CD8-positive, alpha-beta T cell (primary cell): ENCODE measurements at regions of chr5 and their contacts with region 1.

Region 1: DNA sequence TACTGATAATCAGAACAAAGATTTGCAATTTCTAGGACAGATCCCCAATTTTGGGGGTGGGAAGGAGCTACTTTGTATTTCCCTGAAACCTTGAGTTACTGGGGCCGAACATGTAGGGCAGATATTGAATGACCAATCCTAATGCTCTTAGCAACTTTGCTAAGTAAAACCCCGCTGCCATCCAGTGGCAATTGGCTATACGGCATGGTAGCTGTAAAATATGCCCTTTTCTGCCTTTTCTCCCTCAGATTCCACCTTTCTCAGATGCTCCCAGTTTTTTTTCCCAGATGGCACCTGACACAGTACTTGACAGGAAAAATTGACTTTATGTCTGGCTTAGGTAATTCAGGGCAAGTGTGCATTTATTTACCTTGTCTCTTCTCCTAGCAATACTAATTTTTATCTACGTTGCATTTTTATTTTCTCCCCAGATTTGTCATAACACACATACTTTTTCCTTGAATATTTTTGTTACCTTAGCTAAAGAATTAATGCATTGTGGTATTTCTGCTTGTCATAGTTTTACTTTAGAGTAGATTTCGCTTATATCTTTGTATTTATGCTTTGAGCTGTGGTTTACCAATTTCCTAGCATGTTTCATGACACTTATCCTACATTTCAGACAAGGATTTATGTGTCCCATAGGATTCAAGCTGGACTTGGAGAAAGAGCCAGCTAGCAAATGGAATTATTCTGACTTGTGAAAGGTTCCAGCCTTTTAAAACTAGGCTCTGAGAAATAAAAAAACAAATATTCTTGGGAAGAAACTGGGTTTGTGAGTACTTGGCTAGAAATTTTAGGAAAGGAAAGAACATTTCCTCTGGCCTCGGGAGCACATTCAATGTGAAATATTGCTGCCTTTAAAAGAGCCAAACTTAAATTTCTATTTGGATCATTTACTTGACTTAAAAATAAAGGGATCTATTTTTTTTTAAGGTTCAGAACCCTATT is 37.4 kb downstream of the PIK3R1 start:
- DNase-seq: peak in 7 of 9 experiments; percentile 28 to 71 (median 56)
- ATAC-seq: no peak
- H3K4me3 ChIP-seq: no peak overlapping the region
- H3K4me3 Mint-ChIP-seq: no peak overlapping the region
- H3K27ac ChIP-seq: peak overlapping the region in 1 of 2 experiments; percentile 8
- H3K27ac Mint-ChIP-seq: peak overlapping the region; percentile 22
- H3K4me1 ChIP-seq: peaks cover 81% of the 10 kb centered on the region
- H3K4me1 Mint-ChIP-seq: peaks cover 91% of the 10 kb centered on the region
- H3K27me3 ChIP-seq: no peaks in the 10 kb centered on the region
- H3K27me3 Mint-ChIP-seq: no peaks in the 10 kb centered on the region
- CTCF ChIP-seq: peak; percentile 78

Region 2: DNA sequence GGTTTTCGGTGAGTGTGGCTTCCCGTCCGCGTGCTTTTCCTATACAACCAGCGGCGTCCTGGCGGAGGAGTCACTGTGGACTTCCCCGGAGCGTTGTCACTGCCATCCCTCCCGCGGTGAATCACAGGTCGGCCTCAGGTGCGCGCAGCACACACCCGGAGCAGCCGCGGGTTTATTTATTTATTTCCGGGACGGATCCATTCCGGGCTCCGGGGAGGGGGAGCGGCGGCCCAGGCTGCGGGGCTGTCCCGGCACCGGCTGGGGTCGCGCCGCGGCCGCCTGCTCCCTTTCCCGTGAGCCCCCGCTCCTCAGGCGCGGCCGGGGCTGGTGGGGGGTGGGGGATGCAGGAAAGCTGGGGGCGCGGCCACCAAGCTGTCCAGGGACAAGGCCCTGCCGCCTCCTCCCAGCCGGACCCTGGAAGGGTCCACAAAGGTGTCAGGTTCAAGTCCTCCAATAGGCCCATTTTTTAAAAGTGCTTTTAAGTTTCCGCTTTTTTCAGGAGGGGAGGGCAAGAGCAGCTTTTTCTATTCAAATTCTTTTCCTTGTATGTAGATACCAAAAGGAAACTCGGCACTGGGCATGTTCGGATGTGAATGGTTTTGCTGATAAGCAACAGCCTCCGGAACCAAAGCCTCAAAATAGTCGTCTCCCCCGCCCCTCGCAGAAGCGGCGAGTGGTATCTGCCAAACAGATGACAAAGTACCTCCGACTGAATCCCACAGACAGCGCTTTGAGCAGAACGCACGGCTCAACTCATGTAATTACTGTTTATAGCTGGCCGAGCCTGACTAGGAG is 1248.8 kb before region 1 on chr5:
- CTCF ChIA-PET with region 1: no interaction called
- POLR2A ChIA-PET with region 1: no interaction called
- intact Hi-C with region 1: loop called in 1 of 2 experiments (anchors 10 kb)
- DNase-seq: peak; percentile 70 to 93 (median 87)
- ATAC-seq: peak; percentile 78
- H3K4me3 ChIP-seq: peak overlapping the region; percentile 75 to 85
- H3K4me3 Mint-ChIP-seq: peak overlapping the region; percentile 95
- H3K27ac ChIP-seq: peak overlapping the region; percentile 59 to 75
- H3K27ac Mint-ChIP-seq: peak overlapping the region; percentile 98
- H3K4me1 ChIP-seq: peaks cover 36% of the 10 kb centered on the region
- H3K4me1 Mint-ChIP-seq: peaks cover 52% of the 10 kb centered on the region
- H3K27me3 ChIP-seq: no peaks in the 10 kb centered on the region
- H3K27me3 Mint-ChIP-seq: no peaks in the 10 kb centered on the region
- CTCF ChIP-seq: no peak

Region 3: DNA sequence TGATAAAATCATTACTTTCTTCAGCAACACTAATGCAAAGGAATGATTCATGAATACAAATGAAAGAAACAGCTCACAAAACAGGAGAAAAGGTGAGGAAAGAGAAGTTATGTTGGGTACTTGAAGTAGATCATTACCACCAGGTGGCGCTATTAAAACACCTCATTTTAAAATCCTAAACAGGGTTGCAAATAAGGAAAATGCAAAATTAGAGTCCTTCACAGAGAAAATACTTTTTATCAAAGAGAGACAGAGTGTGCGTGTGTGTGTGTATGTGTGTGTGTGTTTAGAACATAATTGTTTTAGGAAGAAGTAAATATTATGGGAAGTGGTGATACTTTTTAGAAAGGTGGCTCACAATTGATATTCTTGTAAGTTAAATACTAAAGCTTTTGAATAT is 1006.8 kb before region 1 on chr5:
- CTCF ChIA-PET with region 1: interaction called, 73 read pairs
- POLR2A ChIA-PET with region 1: no interaction called
- intact Hi-C with region 1: loop called (anchors 1 to 2 kb)
- DNase-seq: peak in 3 of 9 experiments; percentile 39 to 80 (median 74)
- ATAC-seq: no peak
- H3K4me3 ChIP-seq: no peak overlapping the region
- H3K4me3 Mint-ChIP-seq: no peak overlapping the region
- H3K27ac ChIP-seq: no peak overlapping the region
- H3K27ac Mint-ChIP-seq: no peak overlapping the region
- H3K4me1 ChIP-seq: peaks cover 9% of the 10 kb centered on the region
- H3K4me1 Mint-ChIP-seq: peaks cover 11% of the 10 kb centered on the region
- H3K27me3 ChIP-seq: no peaks in the 10 kb centered on the region
- H3K27me3 Mint-ChIP-seq: no peaks in the 10 kb centered on the region
- CTCF ChIP-seq: peak; percentile 95

Region 4: DNA sequence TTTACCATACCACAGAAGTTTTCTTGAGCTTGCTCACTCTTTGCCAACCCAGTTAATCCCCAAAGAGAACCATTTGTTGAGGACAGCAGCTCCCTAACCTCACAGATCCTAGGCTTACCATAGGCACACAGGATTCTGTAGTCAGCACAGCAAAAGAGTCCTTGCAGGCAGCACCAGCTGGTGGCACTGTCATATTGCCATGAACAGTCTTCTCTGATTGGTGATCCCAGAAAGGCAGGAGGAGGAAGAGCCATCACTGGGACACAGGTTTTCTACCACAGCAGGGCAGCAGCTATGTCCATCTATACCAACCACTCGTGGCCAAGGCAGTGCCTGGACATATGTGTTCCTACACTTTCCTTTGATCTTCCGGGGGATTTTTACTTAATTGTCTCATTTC is 759.3 kb before region 1 on chr5:
- CTCF ChIA-PET with region 1: interaction called, 4 read pairs
- POLR2A ChIA-PET with region 1: no interaction called
- intact Hi-C with region 1: loop called (anchors 2 to 10 kb)
- DNase-seq: peak in 2 of 9 experiments; percentile 27 to 34
- ATAC-seq: no peak
- H3K4me3 ChIP-seq: no peak overlapping the region
- H3K4me3 Mint-ChIP-seq: no peak overlapping the region
- H3K27ac ChIP-seq: no peak overlapping the region
- H3K27ac Mint-ChIP-seq: no peak overlapping the region
- H3K4me1 ChIP-seq: no peaks in the 10 kb centered on the region
- H3K4me1 Mint-ChIP-seq: peaks cover 8% of the 10 kb centered on the region
- H3K27me3 ChIP-seq: no peaks in the 10 kb centered on the region
- H3K27me3 Mint-ChIP-seq: no peaks in the 10 kb centered on the region
- CTCF ChIP-seq: no peak

Region 5: GRCh38 chr5:68215208-68215897 is 37.6 kb before region 1 on chr5 and contains the start of gene PIK3R1:
- CTCF ChIA-PET with region 1: interaction called, 11 read pairs
- POLR2A ChIA-PET with region 1: interaction called, 24 read pairs
- intact Hi-C with region 1: loop called (anchors 5 kb)
- DNase-seq: peak; percentile 84 to 96 (median 91)
- ATAC-seq: peak; percentile 78
- H3K4me3 ChIP-seq: peak within 1 kb of the TSS; percentile 81 to 93
- H3K4me3 Mint-ChIP-seq: peak within 1 kb of the TSS; percentile 87
- H3K27ac ChIP-seq: peak within 1 kb of the TSS; percentile 83 to 94
- H3K27ac Mint-ChIP-seq: peak within 1 kb of the TSS; percentile 96
- H3K4me1 ChIP-seq: peaks cover 35% of the 10 kb centered on the region
- H3K4me1 Mint-ChIP-seq: peaks cover 46% of the 10 kb centered on the region
- H3K27me3 ChIP-seq: no peaks in the 10 kb centered on the region
- H3K27me3 Mint-ChIP-seq: no peaks in the 10 kb centered on the region
- CTCF ChIP-seq: no peak
- total RNA-seq, gene PIK3R1: 461 to 470 TPM

Region 6: DNA sequence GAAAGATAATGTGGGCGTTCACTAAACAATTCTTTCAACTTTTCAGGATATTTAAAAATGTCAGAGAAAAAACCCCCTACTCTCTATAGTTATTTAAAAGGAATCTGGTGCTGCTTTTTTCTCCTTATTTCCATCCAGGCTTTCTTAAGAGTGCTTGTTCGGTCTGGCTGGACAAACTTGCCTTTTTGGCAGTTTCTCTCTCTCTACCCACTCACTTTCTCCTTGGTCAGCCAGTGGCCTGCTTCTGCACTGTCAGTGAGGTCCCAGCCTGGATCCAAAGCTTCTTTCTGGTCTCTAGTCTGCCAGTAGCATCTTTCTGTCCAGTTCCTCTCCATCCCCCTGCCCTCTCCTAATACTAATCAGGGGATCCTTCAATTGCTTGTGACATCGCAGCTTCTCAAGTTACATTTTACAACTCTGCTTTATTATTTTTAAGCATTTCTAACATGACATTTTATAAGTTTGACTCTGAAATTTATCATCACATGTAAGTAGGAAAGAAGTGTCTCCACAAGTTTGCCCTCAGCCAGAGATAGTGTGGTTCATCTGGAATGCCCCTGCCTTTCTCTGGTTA is 13.0 kb after region 1 on chr5:
- CTCF ChIA-PET with region 1: interaction called, 91 read pairs
- POLR2A ChIA-PET with region 1: interaction called, 3 read pairs
- intact Hi-C with region 1: loop called in 1 of 2 experiments (anchors 1 kb)
- DNase-seq: no peak
- ATAC-seq: no peak
- H3K4me3 ChIP-seq: no peak overlapping the region
- H3K4me3 Mint-ChIP-seq: no peak overlapping the region
- H3K27ac ChIP-seq: peak overlapping the region in 1 of 2 experiments; percentile 47
- H3K27ac Mint-ChIP-seq: peak overlapping the region; percentile 89
- H3K4me1 ChIP-seq: peaks cover 73% of the 10 kb centered on the region
- H3K4me1 Mint-ChIP-seq: peaks cover 84% of the 10 kb centered on the region
- H3K27me3 ChIP-seq: no peaks in the 10 kb centered on the region
- H3K27me3 Mint-ChIP-seq: no peaks in the 10 kb centered on the region
- CTCF ChIP-seq: no peak

Region 7: DNA sequence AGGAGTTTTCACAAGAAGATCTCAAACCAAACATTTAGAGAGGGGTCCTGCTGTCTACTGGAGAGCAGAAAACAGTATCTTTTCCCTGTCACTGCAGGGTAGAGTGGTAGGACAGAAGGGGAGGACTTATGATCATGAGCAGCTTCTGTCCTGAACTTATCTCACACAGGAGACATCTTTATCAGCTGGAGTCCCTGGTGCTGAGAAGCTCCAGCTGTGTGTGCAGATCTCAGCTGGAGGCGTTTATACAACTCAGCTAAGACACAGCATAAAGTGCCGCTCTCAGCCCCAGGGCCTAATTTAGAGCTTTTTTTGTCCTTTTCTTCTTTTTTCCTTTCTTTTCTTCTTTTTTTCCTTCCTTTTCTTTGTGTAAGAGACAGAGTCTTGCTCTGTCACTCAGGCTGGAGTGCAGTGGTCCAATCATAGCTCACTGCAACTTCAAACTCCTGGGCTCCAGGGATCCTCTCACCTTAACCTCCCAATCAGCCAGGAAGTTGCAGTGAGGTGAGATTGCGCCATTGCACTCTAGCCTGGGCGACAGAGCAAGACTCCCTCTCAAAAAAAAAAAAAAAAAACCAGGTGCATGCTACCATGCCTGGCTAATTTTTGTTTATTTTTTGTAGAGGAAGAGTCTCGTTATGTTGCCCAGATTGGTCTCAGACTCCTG is 1047.7 kb after region 1 on chr5:
- CTCF ChIA-PET with region 1: no interaction called
- POLR2A ChIA-PET with region 1: no interaction called
- intact Hi-C with region 1: no loop called
- DNase-seq: no peak
- ATAC-seq: no peak
- H3K4me3 ChIP-seq: no peak overlapping the region
- H3K4me3 Mint-ChIP-seq: no peak overlapping the region
- H3K27ac ChIP-seq: no peak overlapping the region
- H3K27ac Mint-ChIP-seq: no peak overlapping the region
- H3K4me1 ChIP-seq: no peaks in the 10 kb centered on the region
- H3K4me1 Mint-ChIP-seq: no peaks in the 10 kb centered on the region
- H3K27me3 ChIP-seq: no peaks in the 10 kb centered on the region
- H3K27me3 Mint-ChIP-seq: no peaks in the 10 kb centered on the region
- CTCF ChIP-seq: no peak